Activated CD4-positive, alpha-beta T cell treated with anti-CD3 and anti-CD28 coated beads for 36 hours (primary cell): ENCODE measurements at regions of chr10 and their contacts with region 1.

Region 1: DNA sequence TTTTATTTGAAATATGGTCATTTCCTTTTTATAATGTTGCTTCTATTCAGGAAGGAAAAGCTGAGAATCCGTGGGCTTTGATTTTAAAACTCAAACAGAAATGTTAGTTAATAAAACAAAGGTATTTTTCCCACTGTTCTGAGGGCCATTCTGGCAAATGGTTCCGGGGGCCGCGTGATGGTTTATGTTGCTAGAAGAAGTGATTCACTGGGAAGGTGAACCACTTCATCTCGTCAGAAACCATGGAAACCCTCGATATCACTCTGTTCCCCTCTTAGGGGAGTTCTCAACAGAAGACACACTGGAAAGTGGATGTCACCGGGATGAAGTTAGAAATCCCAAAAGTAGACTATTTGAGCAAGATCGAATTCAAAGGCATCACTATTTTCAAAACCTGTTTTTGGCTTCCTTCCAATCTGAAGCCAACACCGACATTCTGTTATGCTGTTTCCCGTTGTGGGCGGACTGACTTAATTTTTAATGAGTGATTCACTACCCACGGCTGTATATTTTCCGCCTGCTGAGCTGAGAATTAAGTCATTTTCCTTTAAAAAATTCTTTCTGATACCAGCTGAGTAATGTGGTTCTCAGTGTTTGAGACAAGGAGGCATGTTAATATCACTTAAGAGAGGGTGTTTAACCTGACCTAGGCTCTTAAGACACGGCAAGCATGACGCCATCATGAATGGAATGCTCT is 84.1 kb downstream of the PTPRE start:
- DNase-seq: peak; percentile 84
- ATAC-seq: peak; percentile 77
- H3K4me3 Mint-ChIP-seq: peak overlapping the region; percentile 21
- H3K27ac Mint-ChIP-seq: peak overlapping the region; percentile 89
- H3K4me1 Mint-ChIP-seq: peaks cover 65% of the 10 kb centered on the region
- H3K27me3 Mint-ChIP-seq: peaks cover 2% of the 10 kb centered on the region

Region 2: GRCh38 chr10:127906548-127907377 is 84.2 kb before region 1 on chr10 and contains the start of gene PTPRE:
- CTCF ChIA-PET with region 1: interaction called, 3 read pairs
- POLR2A ChIA-PET with region 1: no interaction called
- intact Hi-C with region 1: loop called (anchors 1 to 5 kb)
- DNase-seq: peak; percentile 86
- ATAC-seq: peak; percentile 98
- H3K4me3 Mint-ChIP-seq: peak within 1 kb of the TSS; percentile 35
- H3K27ac Mint-ChIP-seq: peak within 1 kb of the TSS; percentile 59
- H3K4me1 Mint-ChIP-seq: no peaks in the 10 kb centered on the region
- H3K27me3 Mint-ChIP-seq: peaks cover 21% of the 10 kb centered on the region
- total RNA-seq, gene PTPRE: 23.0 to 31.6 TPM

Region 3: DNA sequence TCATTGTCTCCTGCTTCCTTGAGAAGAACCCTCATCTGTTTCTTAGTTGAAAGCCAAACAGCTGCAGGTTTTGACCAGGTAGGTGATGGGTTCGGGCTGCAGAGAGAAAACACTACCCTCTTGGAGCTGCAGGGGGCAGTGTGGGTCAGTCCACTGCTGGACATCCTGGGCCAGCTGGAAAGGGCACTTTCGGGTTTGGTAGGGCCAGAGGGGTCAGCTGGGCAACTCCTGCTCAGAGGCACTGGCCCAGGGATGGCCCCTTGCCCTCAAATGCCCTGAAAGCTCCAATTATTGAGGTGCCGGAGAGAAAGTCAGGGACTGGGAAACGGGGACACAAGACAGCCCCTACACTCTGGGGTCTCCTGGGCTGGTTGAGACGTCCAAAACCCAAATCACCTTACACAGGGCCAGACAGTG is 44.6 kb after region 1 on chr10:
- CTCF ChIA-PET with region 1: interaction called, 12 read pairs
- POLR2A ChIA-PET with region 1: no interaction called
- intact Hi-C with region 1: no loop called
- DNase-seq: peak; percentile 81
- ATAC-seq: peak; percentile 88
- H3K4me3 Mint-ChIP-seq: no peak overlapping the region
- H3K27ac Mint-ChIP-seq: no peak overlapping the region
- H3K4me1 Mint-ChIP-seq: peaks cover 6% of the 10 kb centered on the region
- H3K27me3 Mint-ChIP-seq: no peaks in the 10 kb centered on the region

Region 4: GRCh38 chr10:128064108-128064969 is 73.3 kb after region 1 on chr10:
- CTCF ChIA-PET with region 1: interaction called, 10 read pairs
- POLR2A ChIA-PET with region 1: interaction called, 7 read pairs
- intact Hi-C with region 1: loop called (anchors 1 kb)
- DNase-seq: peak; percentile 88
- ATAC-seq: peak; percentile 82
- H3K4me3 Mint-ChIP-seq: peak overlapping the region; percentile 59
- H3K27ac Mint-ChIP-seq: peak overlapping the region; percentile 90
- H3K4me1 Mint-ChIP-seq: peaks cover 69% of the 10 kb centered on the region
- H3K27me3 Mint-ChIP-seq: no peaks in the 10 kb centered on the region

Region 5: GRCh38 chr10:128125944-128126764 is 135.2 kb after region 1 on chr10 and contains the start of gene MKI67:
- CTCF ChIA-PET with region 1: no interaction called
- POLR2A ChIA-PET with region 1: no interaction called
- intact Hi-C with region 1: loop called (anchors 1 to 2 kb)
- DNase-seq: peak; percentile 96
- ATAC-seq: peak; percentile 93
- H3K4me3 Mint-ChIP-seq: peak within 1 kb of the TSS; percentile 93
- H3K27ac Mint-ChIP-seq: peak within 1 kb of the TSS; percentile 90
- H3K4me1 Mint-ChIP-seq: peaks cover 27% of the 10 kb centered on the region
- H3K27me3 Mint-ChIP-seq: peaks cover 13% of the 10 kb centered on the region
- total RNA-seq, gene MKI67: 234 to 244 TPM

Region 6: GRCh38 chr10:128211953-128212727 is 221.1 kb after region 1 on chr10:
- CTCF ChIA-PET with region 1: no interaction called
- POLR2A ChIA-PET with region 1: no interaction called
- intact Hi-C with region 1: loop called in 1 of 2 experiments (anchors 2 kb)
- DNase-seq: peak; percentile 91
- ATAC-seq: peak; percentile 90
- H3K4me3 Mint-ChIP-seq: peak overlapping the region; percentile 65
- H3K27ac Mint-ChIP-seq: peak overlapping the region; percentile 51
- H3K4me1 Mint-ChIP-seq: peaks cover 8% of the 10 kb centered on the region
- H3K27me3 Mint-ChIP-seq: no peaks in the 10 kb centered on the region

Region 7: GRCh38 chr10:128675405-128675804 is 684.4 kb after region 1 on chr10:
- CTCF ChIA-PET with region 1: no interaction called
- POLR2A ChIA-PET with region 1: no interaction called
- intact Hi-C with region 1: no loop called
- DNase-seq: no peak
- ATAC-seq: no peak
- H3K4me3 Mint-ChIP-seq: no peak overlapping the region
- H3K27ac Mint-ChIP-seq: no peak overlapping the region
- H3K4me1 Mint-ChIP-seq: no peaks in the 10 kb centered on the region
- H3K27me3 Mint-ChIP-seq: peaks cover 3% of the 10 kb centered on the region